Breast epithelium (tissue), 4 donors: ENCODE measurements at regions of chr16 and their contacts with region 1.

Region 1: GRCh38 chr16:67516296-67517154 is 12.1 kb upstream of the RIPOR1 start:
- DNase-seq: no peak
- H3K4me3 ChIP-seq: no peak overlapping the region
- H3K27ac ChIP-seq: no peak overlapping the region
- H3K4me1 ChIP-seq: no peaks in the 10 kb centered on the region
- H3K27me3 ChIP-seq: no peaks in the 10 kb centered on the region
- CTCF ChIP-seq: no peak
- POLR2A ChIP-seq: no peak

Region 2: GRCh38 chr16:66899945-66900710 is 616.4 kb before region 1 on chr16:
- intact Hi-C with region 1: no loop called
- DNase-seq: peak in 1 of 2 donors; percentile 28
- H3K4me3 ChIP-seq: no peak overlapping the region
- H3K27ac ChIP-seq: peak overlapping the region; percentile 68 to 84
- H3K4me1 ChIP-seq: no peaks in the 10 kb centered on the region
- H3K27me3 ChIP-seq: no peaks in the 10 kb centered on the region
- CTCF ChIP-seq: no peak
- POLR2A ChIP-seq: no peak

Region 3: GRCh38 chr16:68093816-68094613 is 577.5 kb after region 1 on chr16:
- intact Hi-C with region 1: loop called (anchors 5 kb)
- DNase-seq: no peak
- H3K4me3 ChIP-seq: no peak overlapping the region
- H3K27ac ChIP-seq: no peak overlapping the region
- H3K4me1 ChIP-seq: peaks cover 0 to 8% of the 10 kb centered on the region in 2 donors
- H3K27me3 ChIP-seq: no peaks in the 10 kb centered on the region
- CTCF ChIP-seq: peak in 2 of 3 donors; percentile 29 to 59
- POLR2A ChIP-seq: no peak